Aorta (tissue), 5 donors: ENCODE measurements at regions of chr6 and their contacts with region 1.

Region 1: DNA sequence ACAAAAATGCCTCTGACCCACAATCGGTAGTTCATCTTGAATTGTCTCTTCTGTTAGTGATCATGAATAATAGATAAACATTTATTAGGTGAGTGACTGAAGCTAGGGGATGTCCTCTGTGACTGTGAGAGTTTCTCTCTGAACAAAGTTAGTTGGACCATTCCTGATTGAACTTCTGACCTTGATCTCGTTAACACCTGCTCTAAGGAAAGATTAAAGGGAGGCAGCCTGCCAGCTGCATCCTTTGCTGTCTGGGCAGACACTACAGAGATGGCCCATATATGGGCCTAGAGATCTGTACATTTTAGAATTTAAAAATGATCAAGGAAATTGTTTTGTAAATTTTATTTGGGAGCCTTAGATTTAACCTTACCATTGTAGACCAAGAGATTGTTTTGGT is 27.3 kb downstream of the MAPK14 start:
- DNase-seq: no peak
- ATAC-seq: no peak
- H3K4me3 ChIP-seq: no peak overlapping the region
- H3K27ac ChIP-seq: no peak overlapping the region
- H3K4me1 ChIP-seq: peaks cover 4 to 7% of the 10 kb centered on the region in 2 donors
- H3K27me3 ChIP-seq: no peaks in the 10 kb centered on the region

Region 2: GRCh38 chr6:36094753-36095496 is 40.0 kb after region 1 on chr6:
- intact Hi-C with region 1: loop called in 1 of 2 experiments (anchors 5 kb)
- DNase-seq: peak; percentile 82 to 93
- ATAC-seq: peak; percentile 94
- H3K4me3 ChIP-seq: no peak overlapping the region
- H3K27ac ChIP-seq: peak overlapping the region in 1 of 2 donors; percentile 21
- H3K4me1 ChIP-seq: no peaks in the 10 kb centered on the region
- H3K27me3 ChIP-seq: no peaks in the 10 kb centered on the region

Region 3: DNA sequence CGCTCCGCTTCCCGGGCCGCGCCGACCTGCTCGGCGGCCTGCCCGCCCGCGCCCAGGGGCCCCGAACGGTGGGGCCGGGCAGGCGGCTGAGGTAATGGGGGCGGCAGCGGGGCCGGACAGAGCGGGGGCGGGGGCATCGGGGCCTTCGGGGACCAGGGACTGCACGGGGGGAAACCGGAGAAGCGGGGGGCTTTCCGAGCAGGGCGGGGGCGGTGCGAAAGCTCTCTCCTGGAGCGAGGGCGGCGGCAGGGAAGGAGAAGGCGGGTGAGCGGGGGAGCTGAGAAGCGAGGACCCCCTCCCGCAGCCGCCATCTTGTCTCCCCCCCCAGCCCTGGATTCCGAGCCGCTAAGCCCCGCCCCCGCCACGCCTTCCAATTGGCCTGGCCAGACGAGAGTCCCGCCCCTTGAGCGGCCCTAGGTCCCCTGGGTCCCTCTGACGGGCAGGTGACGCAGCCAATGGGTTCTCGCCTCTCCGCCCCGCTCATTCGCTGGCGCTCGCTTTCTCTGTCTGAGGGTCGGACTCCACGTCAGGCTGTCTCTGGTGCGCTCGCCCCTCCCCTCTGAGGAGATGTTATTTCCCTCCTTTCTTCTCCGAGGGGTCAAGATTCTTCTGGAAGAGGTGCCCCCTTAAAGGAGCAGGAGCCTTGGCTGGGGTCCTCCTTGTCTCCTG is 142.1 kb after region 1 on chr6:
- intact Hi-C with region 1: no loop called
- DNase-seq: peak; percentile 99 to 100
- ATAC-seq: peak; percentile 99
- H3K4me3 ChIP-seq: peak overlapping the region; percentile 72 to 96
- H3K27ac ChIP-seq: peak overlapping the region; percentile 49 to 92
- H3K4me1 ChIP-seq: no peaks in the 10 kb centered on the region
- H3K27me3 ChIP-seq: no peaks in the 10 kb centered on the region